ENCODE measurements at regions of chr10 and their contacts with region 1.

Region 1: DNA sequence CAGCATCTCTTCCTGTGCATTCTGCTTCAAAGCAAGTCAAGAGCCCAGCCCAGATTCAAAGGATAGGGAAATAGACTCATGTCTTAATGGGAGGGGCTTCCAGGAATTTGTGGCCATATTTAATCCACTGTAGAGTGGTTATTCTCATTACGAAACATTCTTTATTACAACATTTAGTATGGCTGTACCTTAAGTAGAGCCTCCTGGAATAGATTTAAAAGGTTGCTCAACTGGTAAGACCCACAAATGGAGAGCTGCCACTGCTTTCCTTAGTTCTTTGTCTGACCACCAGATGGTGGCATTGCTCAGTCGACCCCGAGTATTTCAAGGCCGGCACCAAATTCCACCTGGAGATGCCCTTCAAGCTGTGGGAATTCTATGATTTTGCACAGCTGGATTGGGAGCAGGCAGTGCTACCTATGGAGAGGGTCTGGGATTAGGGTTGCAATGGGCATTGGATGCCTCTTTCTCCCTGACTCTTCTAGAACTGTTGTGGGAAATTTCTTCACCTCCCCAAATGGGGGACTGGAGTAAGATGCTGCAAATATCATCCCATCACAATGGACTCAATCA is 102.2 kb downstream of the RBM20 start:
- DNase-seq: peak in 1 of 2 experiments; percentile 72
- H3K4me3 ChIP-seq: no peak overlapping the region
- H3K27ac ChIP-seq: no peak overlapping the region
- H3K4me1 ChIP-seq: no peaks in the 10 kb centered on the region
- H3K27me3 ChIP-seq: no peaks in the 10 kb centered on the region
- CTCF ChIP-seq: peak; percentile 51 to 86 (median 71)
- EP300 ChIP-seq: no peak
- POLR2A ChIP-seq: no peak
- RAD21 ChIP-seq: peak; percentile 92 to 98

Region 2: DNA sequence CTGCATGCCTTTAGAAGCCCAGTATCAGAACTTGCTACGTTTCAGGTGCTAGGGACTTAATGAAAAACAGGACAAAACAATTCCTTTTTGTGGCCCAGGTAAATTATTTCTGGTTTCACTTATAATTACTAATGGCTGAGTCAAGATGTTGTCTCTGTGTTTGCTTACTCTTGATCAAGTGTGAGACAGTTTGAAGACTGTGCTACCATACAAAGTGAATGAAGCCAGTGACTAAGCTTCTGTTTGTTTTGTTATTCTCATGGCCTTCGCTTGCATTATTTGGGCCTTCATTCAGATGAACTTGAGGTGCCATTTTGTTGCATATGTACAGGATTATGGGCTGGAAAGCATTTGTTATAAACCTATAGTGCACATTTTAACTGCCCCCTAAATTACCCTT is 459.5 kb before region 1 on chr10:
- CTCF ChIA-PET with region 1: no interaction called
- POLR2A ChIA-PET with region 1: no interaction called
- DNase-seq: no peak
- H3K4me3 ChIP-seq: no peak overlapping the region
- H3K27ac ChIP-seq: no peak overlapping the region
- H3K4me1 ChIP-seq: peaks cover 0 to 3% (median 2%) of the 10 kb centered on the region in 4 experiments; a peak in 3 of 7 replicates
- H3K27me3 ChIP-seq: no peaks in the 10 kb centered on the region
- CTCF ChIP-seq: no peak
- EP300 ChIP-seq: no peak
- POLR2A ChIP-seq: no peak
- RAD21 ChIP-seq: no peak

Region 3: GRCh38 chr10:110610308-110610774 is 136.0 kb before region 1 on chr10:
- CTCF ChIA-PET with region 1: interaction called, 10 read pairs
- POLR2A ChIA-PET with region 1: no interaction called
- DNase-seq: peak in 1 of 2 experiments; percentile 51
- H3K4me3 ChIP-seq: no peak overlapping the region
- H3K27ac ChIP-seq: no peak overlapping the region
- H3K4me1 ChIP-seq: peaks cover 5 to 9% (median 8%) of the 10 kb centered on the region in 4 experiments
- H3K27me3 ChIP-seq: no peaks in the 10 kb centered on the region
- CTCF ChIP-seq: peak; percentile 17 to 87 (median 78)
- EP300 ChIP-seq: no peak
- POLR2A ChIP-seq: no peak
- RAD21 ChIP-seq: peak; percentile 95 to 98

Region 4: DNA sequence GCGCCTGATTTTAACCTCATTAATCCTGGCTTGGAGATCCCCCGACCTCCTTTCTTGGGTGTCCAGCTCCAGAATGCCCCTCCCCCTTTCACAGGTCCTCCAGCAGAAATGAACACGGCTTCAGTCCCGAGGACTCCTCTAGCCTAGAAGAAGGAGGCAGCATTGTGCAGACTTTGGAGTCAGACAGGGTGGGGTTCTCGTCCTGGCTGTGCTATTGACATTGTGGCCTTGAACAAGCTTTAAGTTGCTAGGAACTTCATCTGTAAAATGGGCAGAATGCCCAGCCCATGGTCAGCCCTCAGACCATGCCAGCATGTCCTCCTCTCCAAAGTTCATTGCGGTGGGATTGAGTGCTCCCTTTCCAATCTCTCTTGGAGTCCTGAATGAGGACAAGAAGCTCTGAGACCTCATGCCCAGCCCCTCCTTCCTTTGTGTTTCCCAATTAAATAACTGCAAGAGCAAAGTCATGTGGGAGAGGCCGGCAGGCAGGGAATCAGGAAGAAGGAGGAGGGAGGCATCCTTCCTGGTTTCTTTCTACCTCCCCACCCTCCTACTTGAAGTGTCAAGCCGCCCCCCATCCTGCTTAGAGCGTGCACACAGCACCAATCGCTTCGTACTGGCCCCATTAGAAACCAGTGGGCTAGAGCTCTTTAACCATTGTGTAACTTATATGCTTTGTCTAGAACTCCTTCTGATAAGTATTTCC is 15.8 kb before region 1 on chr10:
- CTCF ChIA-PET with region 1: interaction called, 12 read pairs
- POLR2A ChIA-PET with region 1: no interaction called
- DNase-seq: no peak
- H3K4me3 ChIP-seq: no peak overlapping the region
- H3K27ac ChIP-seq: no peak overlapping the region
- H3K4me1 ChIP-seq: no peaks in the 10 kb centered on the region; a peak in 1 of 7 replicates
- H3K27me3 ChIP-seq: no peaks in the 10 kb centered on the region
- CTCF ChIP-seq: no peak
- EP300 ChIP-seq: no peak
- POLR2A ChIP-seq: no peak
- RAD21 ChIP-seq: no peak

Region 5: DNA sequence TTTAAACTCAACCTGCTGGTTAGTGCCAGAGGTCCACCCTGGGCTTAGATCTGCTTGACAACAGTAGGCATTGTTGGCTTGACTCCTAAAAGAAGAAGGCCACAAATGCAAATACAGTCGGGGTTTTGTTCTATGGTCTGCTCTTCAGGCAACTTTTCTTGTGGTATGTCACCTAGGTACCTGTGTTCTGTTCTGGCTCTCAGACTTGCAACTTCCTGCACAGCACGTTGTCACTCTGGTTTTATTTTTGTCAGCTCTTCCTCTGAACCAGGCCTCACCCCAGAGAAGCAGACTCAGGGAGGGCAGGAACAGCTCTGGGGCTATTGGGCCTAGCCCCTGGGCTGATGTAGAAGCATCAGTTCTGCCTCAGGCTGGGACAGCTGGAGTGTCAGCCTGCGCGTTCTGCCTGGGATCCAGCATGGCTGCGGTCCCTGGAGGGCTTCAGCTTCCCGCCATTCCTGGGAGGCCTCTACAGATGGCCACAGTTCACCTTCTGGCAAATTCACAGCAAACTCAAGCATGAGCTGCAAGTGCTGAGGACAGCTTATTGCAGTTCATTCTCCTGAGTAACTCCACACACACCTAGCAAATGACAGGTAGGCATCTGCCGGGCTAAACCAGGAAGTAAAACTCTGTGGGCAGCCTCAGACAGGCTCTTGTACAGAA is 114.4 kb after region 1 on chr10:
- CTCF ChIA-PET with region 1: interaction called, 10 read pairs
- POLR2A ChIA-PET with region 1: no interaction called
- DNase-seq: peak in 1 of 2 experiments; percentile 35
- H3K4me3 ChIP-seq: no peak overlapping the region
- H3K27ac ChIP-seq: no peak overlapping the region
- H3K4me1 ChIP-seq: no peaks in the 10 kb centered on the region
- H3K27me3 ChIP-seq: no peaks in the 10 kb centered on the region
- CTCF ChIP-seq: no peak
- EP300 ChIP-seq: no peak
- POLR2A ChIP-seq: no peak
- RAD21 ChIP-seq: no peak

Region 6: GRCh38 chr10:110885932-110886674 is 139.8 kb after region 1 on chr10:
- CTCF ChIA-PET with region 1: interaction called, 14 read pairs
- POLR2A ChIA-PET with region 1: no interaction called
- DNase-seq: no peak
- H3K4me3 ChIP-seq: no peak overlapping the region
- H3K27ac ChIP-seq: no peak overlapping the region
- H3K4me1 ChIP-seq: no peaks in the 10 kb centered on the region
- H3K27me3 ChIP-seq: peaks cover 0 to 1% (median 0%) of the 10 kb centered on the region in 4 experiments; a peak in 1 of 7 replicates
- CTCF ChIP-seq: no peak
- EP300 ChIP-seq: no peak
- POLR2A ChIP-seq: no peak
- RAD21 ChIP-seq: no peak

Region 7: DNA sequence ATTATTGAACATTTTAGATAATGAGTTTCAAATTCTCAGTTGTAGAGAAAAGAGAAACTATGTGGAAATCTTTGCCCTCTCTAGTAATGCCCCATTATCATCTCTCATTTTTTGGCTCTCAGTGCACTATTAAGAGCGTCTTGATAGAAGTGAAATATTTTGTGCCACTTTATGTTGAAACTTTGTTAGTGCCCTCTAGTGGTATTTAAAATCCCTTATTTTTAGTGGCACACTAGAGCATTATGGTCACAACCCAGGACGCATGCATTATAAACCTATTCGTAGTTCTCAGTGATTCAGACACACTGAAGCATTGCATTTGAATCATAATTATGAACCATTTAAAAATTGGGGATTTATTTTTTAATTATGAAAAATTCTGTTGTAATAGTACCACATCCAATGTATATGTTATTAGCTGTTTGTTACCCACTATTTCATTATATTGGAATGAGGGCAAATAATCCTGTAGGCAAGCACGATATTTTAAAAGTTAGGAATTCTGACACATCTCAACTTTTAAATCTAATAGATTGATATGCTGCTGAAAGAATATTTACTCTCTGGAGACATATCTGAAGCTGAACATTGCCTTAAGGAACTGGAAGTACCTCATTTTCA is 147.3 kb after region 1 on chr10:
- CTCF ChIA-PET with region 1: interaction called, 26 read pairs
- POLR2A ChIA-PET with region 1: no interaction called
- DNase-seq: no peak
- H3K4me3 ChIP-seq: no peak overlapping the region
- H3K27ac ChIP-seq: no peak overlapping the region
- H3K4me1 ChIP-seq: no peaks in the 10 kb centered on the region
- H3K27me3 ChIP-seq: peaks cover 0 to 1% (median 0%) of the 10 kb centered on the region in 4 experiments; a peak in 1 of 7 replicates
- CTCF ChIP-seq: peak in 2 of 3 experiments; percentile 26 to 45; a peak in 2 of 4 replicates
- EP300 ChIP-seq: no peak
- POLR2A ChIP-seq: no peak
- RAD21 ChIP-seq: peak; percentile 43 to 51

Region 8: GRCh38 chr10:110901954-110902819 is 155.8 kb after region 1 on chr10:
- CTCF ChIA-PET with region 1: interaction called, 22 read pairs
- POLR2A ChIA-PET with region 1: no interaction called
- DNase-seq: no peak
- H3K4me3 ChIP-seq: no peak overlapping the region
- H3K27ac ChIP-seq: no peak overlapping the region
- H3K4me1 ChIP-seq: no peaks in the 10 kb centered on the region; a peak in 1 of 7 replicates
- H3K27me3 ChIP-seq: no peaks in the 10 kb centered on the region
- CTCF ChIP-seq: no peak
- EP300 ChIP-seq: no peak
- POLR2A ChIP-seq: no peak
- RAD21 ChIP-seq: no peak

Region 9: GRCh38 chr10:110918643-110919363 is 172.5 kb after region 1 on chr10 and contains the start of gene BBIP1:
- CTCF ChIA-PET with region 1: no interaction called
- POLR2A ChIA-PET with region 1: no interaction called
- DNase-seq: peak; percentile 90 to 99
- H3K4me3 ChIP-seq: peak within 1 kb of the TSS; percentile 85 to 100 (median 98)
- H3K27ac ChIP-seq: peak within 1 kb of the TSS; percentile 91
- H3K4me1 ChIP-seq: peaks cover 0 to 7% (median 4%) of the 10 kb centered on the region in 4 experiments; a peak in 5 of 7 replicates
- H3K27me3 ChIP-seq: no peaks in the 10 kb centered on the region
- CTCF ChIP-seq: no peak
- EP300 ChIP-seq: 0 out of 3 replicates have a peak, but pooled peaks of 1 of the 2 experiments have one; percentile 11
- POLR2A ChIP-seq: peak in 1 of 2 experiments; percentile 71; a peak in 2 of 3 replicates
- RAD21 ChIP-seq: no peak
- total RNA-seq, gene BBIP1: 19.6 and 22.2 TPM in 2 replicates